CD4-positive, alpha-beta T cell (primary cell): ENCODE measurements at regions of chr10 and their contacts with region 1.

Region 1: GRCh38 chr10:118754720-118755480 is at the start of gene CACUL1:
- DNase-seq: peak; percentile 99 to 100 (median 100)
- ATAC-seq: peak; percentile 97
- H3K4me3 ChIP-seq: peak within 1 kb of the TSS; percentile 91
- H3K4me3 Mint-ChIP-seq: peak within 1 kb of the TSS; percentile 99
- H3K27ac ChIP-seq: peak within 1 kb of the TSS; percentile 52 to 79
- H3K27ac Mint-ChIP-seq: peak within 1 kb of the TSS; percentile 94
- H3K4me1 ChIP-seq: peaks cover 30% of the 10 kb centered on the region
- H3K4me1 Mint-ChIP-seq: peaks cover 46% of the 10 kb centered on the region
- H3K27me3 ChIP-seq: no peaks in the 10 kb centered on the region
- H3K27me3 Mint-ChIP-seq: no peaks in the 10 kb centered on the region
- CTCF ChIP-seq: no peak
- total RNA-seq, gene CACUL1: 36.7 to 37.4 TPM

Region 2: GRCh38 chr10:117375360-117376178 is 1379.3 kb before region 1 on chr10 and contains the start of gene PDZD8:
- CTCF ChIA-PET with region 1: no interaction called
- POLR2A ChIA-PET with region 1: interaction called, 3 read pairs
- intact Hi-C with region 1: loop called in 1 of 2 experiments (anchors 10 kb)
- DNase-seq: peak; percentile 81 to 96 (median 92)
- ATAC-seq: peak; percentile 78
- H3K4me3 ChIP-seq: peak within 1 kb of the TSS; percentile 94
- H3K4me3 Mint-ChIP-seq: peak within 1 kb of the TSS; percentile 95
- H3K27ac ChIP-seq: peak within 1 kb of the TSS; percentile 55 to 59
- H3K27ac Mint-ChIP-seq: peak within 1 kb of the TSS; percentile 88
- H3K4me1 ChIP-seq: peaks cover 38% of the 10 kb centered on the region
- H3K4me1 Mint-ChIP-seq: peaks cover 40% of the 10 kb centered on the region
- H3K27me3 ChIP-seq: peaks cover 0 to 3% of the 10 kb centered on the region in 2 experiments
- H3K27me3 Mint-ChIP-seq: peaks cover 28% of the 10 kb centered on the region
- CTCF ChIP-seq: no peak
- total RNA-seq, gene PDZD8: 25.2 to 31.1 TPM

Region 3: GRCh38 chr10:118341791-118342637 is 412.9 kb before region 1 on chr10 and contains the start of gene FAM204A:
- CTCF ChIA-PET with region 1: no interaction called
- POLR2A ChIA-PET with region 1: no interaction called
- intact Hi-C with region 1: loop called (anchors 5 to 10 kb)
- DNase-seq: peak; percentile 92 to 99 (median 95)
- ATAC-seq: peak; percentile 96
- H3K4me3 ChIP-seq: peak within 1 kb of the TSS; percentile 98
- H3K4me3 Mint-ChIP-seq: peak within 1 kb of the TSS; percentile 99
- H3K27ac ChIP-seq: peak within 1 kb of the TSS; percentile 36 to 58
- H3K27ac Mint-ChIP-seq: peak within 1 kb of the TSS; percentile 88
- H3K4me1 ChIP-seq: peaks cover 21% of the 10 kb centered on the region
- H3K4me1 Mint-ChIP-seq: peaks cover 58% of the 10 kb centered on the region
- H3K27me3 ChIP-seq: no peaks in the 10 kb centered on the region
- H3K27me3 Mint-ChIP-seq: no peaks in the 10 kb centered on the region
- CTCF ChIP-seq: no peak
- total RNA-seq, gene FAM204A: 47.3 to 54.7 TPM

Region 4: GRCh38 chr10:118698421-118698820 is 56.5 kb before region 1 on chr10:
- CTCF ChIA-PET with region 1: no interaction called
- POLR2A ChIA-PET with region 1: interaction called, 21 read pairs
- intact Hi-C with region 1: loop called in 1 of 2 experiments (anchors 1 kb)
- DNase-seq: peak; percentile 64 to 91 (median 80)
- ATAC-seq: peak; percentile 100
- H3K4me3 ChIP-seq: peak overlapping the region; percentile 22
- H3K4me3 Mint-ChIP-seq: peak overlapping the region; percentile 71
- H3K27ac ChIP-seq: peak overlapping the region; percentile 46 to 50
- H3K27ac Mint-ChIP-seq: peak overlapping the region; percentile 80
- H3K4me1 ChIP-seq: peaks cover 17% of the 10 kb centered on the region
- H3K4me1 Mint-ChIP-seq: peaks cover 84% of the 10 kb centered on the region
- H3K27me3 ChIP-seq: no peaks in the 10 kb centered on the region
- H3K27me3 Mint-ChIP-seq: no peaks in the 10 kb centered on the region
- CTCF ChIP-seq: no peak

Region 5: DNA sequence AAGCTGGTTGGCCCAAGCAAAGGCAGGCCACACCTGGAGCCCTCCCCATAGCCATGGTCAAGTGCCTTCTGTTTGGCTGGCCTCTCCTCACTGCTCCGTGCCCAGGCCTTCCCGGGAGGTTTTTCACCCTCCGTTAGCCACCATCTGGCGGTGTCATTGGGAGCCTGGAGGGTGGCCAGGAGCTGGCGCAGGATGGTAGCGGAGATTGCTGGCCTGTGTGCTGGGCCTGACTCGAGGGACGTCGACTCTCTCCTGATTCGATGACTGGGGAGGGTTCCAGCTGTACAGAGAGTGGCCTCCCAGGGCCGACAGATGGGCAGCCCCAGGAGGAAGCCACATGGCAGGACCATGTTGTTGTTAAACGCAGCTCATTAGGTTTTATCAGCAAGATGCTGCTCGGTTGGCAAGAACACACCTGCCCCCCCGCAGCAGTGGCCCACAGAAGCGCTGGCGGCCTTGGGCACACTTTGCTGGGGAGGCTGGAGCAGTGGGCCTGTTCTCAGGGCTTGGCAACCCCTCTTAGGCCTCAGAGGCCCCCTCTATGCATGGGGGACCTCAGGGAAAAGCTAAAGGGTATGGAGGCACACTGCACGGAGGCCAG is 63.8 kb after region 1 on chr10:
- CTCF ChIA-PET with region 1: no interaction called
- POLR2A ChIA-PET with region 1: no interaction called
- intact Hi-C with region 1: no loop called
- DNase-seq: no peak
- ATAC-seq: no peak
- H3K4me3 ChIP-seq: no peak overlapping the region
- H3K4me3 Mint-ChIP-seq: no peak overlapping the region
- H3K27ac ChIP-seq: no peak overlapping the region
- H3K27ac Mint-ChIP-seq: no peak overlapping the region
- H3K4me1 ChIP-seq: no peaks in the 10 kb centered on the region
- H3K4me1 Mint-ChIP-seq: no peaks in the 10 kb centered on the region
- H3K27me3 ChIP-seq: no peaks in the 10 kb centered on the region
- H3K27me3 Mint-ChIP-seq: peaks cover 4% of the 10 kb centered on the region
- CTCF ChIP-seq: no peak

Region 6: GRCh38 chr10:119028900-119029612 is 274.2 kb after region 1 on chr10:
- CTCF ChIA-PET with region 1: no interaction called
- POLR2A ChIA-PET with region 1: no interaction called
- intact Hi-C with region 1: loop called in 1 of 2 experiments (anchors 5 kb)
- DNase-seq: peak; percentile 56 to 91 (median 76)
- ATAC-seq: peak; percentile 83
- H3K4me3 ChIP-seq: peak overlapping the region; percentile 55
- H3K4me3 Mint-ChIP-seq: peak overlapping the region; percentile 87
- H3K27ac ChIP-seq: no peak overlapping the region
- H3K27ac Mint-ChIP-seq: no peak overlapping the region
- H3K4me1 ChIP-seq: peaks cover 13% of the 10 kb centered on the region
- H3K4me1 Mint-ChIP-seq: peaks cover 20% of the 10 kb centered on the region
- H3K27me3 ChIP-seq: no peaks in the 10 kb centered on the region
- H3K27me3 Mint-ChIP-seq: no peaks in the 10 kb centered on the region
- CTCF ChIP-seq: no peak

Region 7: GRCh38 chr10:119165171-119166110 is 410.5 kb after region 1 on chr10 and contains the start of gene SFXN4:
- CTCF ChIA-PET with region 1: no interaction called
- POLR2A ChIA-PET with region 1: no interaction called
- intact Hi-C with region 1: loop called (anchors 10 kb)
- DNase-seq: peak; percentile 59 to 91 (median 74)
- ATAC-seq: peak; percentile 94
- H3K4me3 ChIP-seq: peak within 1 kb of the TSS; percentile 92
- H3K4me3 Mint-ChIP-seq: peak within 1 kb of the TSS; percentile 94
- H3K27ac ChIP-seq: peak within 1 kb of the TSS; percentile 50 to 75
- H3K27ac Mint-ChIP-seq: peak within 1 kb of the TSS; percentile 90
- H3K4me1 ChIP-seq: peaks cover 24% of the 10 kb centered on the region
- H3K4me1 Mint-ChIP-seq: peaks cover 49% of the 10 kb centered on the region
- H3K27me3 ChIP-seq: no peaks in the 10 kb centered on the region
- H3K27me3 Mint-ChIP-seq: no peaks in the 10 kb centered on the region
- CTCF ChIP-seq: no peak
- total RNA-seq, gene SFXN4: 7.1 to 7.8 TPM

Region 8: GRCh38 chr10:119872860-119873681 is 1118.2 kb after region 1 on chr10:
- CTCF ChIA-PET with region 1: no interaction called
- POLR2A ChIA-PET with region 1: interaction called, 7 read pairs
- intact Hi-C with region 1: loop called in 1 of 2 experiments (anchors 5 kb)
- DNase-seq: peak; percentile 78 to 96 (median 86)
- ATAC-seq: peak; percentile 90
- H3K4me3 ChIP-seq: peak overlapping the region; percentile 80
- H3K4me3 Mint-ChIP-seq: peak overlapping the region; percentile 93
- H3K27ac ChIP-seq: peak overlapping the region; percentile 78 to 87
- H3K27ac Mint-ChIP-seq: peak overlapping the region; percentile 94
- H3K4me1 ChIP-seq: peaks cover 37% of the 10 kb centered on the region
- H3K4me1 Mint-ChIP-seq: peaks cover 35% of the 10 kb centered on the region
- H3K27me3 ChIP-seq: no peaks in the 10 kb centered on the region
- H3K27me3 Mint-ChIP-seq: no peaks in the 10 kb centered on the region
- CTCF ChIP-seq: no peak